ENCODE measurements at regions of chr6 and their contacts with region 1.

Region 1: DNA sequence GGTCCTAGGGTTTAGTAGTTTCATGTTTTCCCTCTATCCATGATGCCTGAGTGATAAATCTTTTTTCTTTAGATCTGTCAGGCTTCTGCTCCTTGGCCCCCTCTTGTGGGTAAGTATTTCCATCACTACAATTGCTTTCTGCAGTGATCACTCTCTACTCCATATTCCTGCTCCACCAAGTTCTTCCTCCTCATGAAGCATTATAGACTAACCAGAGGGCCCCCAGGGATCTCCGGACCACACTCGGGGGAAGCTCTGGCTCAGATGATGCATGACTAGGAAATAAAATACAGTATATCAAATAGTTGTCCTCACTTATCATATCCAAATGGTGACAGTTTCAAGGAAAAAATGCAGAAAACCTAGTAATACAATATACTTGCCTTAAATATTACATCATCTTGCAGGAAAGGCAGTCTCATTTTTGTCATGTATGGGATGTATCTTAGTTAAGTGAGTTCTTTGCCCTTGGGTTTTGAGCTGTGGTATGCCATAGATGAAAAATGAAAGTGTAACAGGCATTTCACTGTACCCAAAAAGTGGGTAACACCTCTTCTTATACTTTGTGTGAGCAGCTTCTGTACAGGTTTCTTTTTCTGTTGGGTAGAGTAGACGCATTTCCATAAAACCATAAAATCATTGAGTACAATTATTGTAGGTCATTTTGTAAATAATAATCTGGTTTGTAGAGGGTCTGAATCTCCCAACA is 200.9 kb upstream of the EYA4 start:
- H3K4me3 ChIP-seq: no peak overlapping the region
- H3K27ac ChIP-seq: no peak overlapping the region
- H3K4me1 ChIP-seq: peaks cover 6% of the 10 kb centered on the region; the same call in 1 of the 2 replicates
- CTCF ChIP-seq: peak; percentile 42; the same call in 1 of the 2 replicates

Region 2: DNA sequence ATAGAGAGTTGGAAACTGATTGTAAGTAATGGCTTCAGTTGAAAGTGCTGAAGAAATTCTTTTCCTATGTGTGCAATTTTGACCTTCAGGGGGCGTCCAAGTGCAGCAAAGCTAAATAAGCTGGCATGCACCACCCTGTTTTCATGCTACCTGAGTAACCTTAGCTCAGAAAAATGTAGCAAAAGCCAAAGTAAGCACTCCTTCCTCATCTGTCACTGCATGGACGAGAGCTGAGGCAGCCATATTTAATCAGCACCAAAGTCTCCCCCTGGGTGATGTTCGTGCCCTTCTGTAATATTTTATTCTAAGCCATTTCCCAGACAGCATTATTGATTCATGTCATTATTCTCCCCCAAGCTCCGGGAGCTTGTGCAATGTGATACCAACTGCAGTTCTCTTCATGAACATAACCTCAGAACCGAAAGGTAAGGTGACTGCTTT is 102.8 kb before region 1 on chr6:
- CTCF ChIA-PET with region 1: interaction called, 12 read pairs
- POLR2A ChIA-PET with region 1: no interaction called
- H3K4me3 ChIP-seq: no peak overlapping the region
- H3K27ac ChIP-seq: no peak overlapping the region
- H3K4me1 ChIP-seq: peaks cover 8% of the 10 kb centered on the region
- CTCF ChIP-seq: peak; percentile 53

Region 3: GRCh38 chr6:132973514-132973993 is 66.7 kb before region 1 on chr6:
- CTCF ChIA-PET with region 1: interaction called, 10 read pairs
- POLR2A ChIA-PET with region 1: no interaction called
- H3K4me3 ChIP-seq: no peak overlapping the region
- H3K27ac ChIP-seq: no peak overlapping the region
- H3K4me1 ChIP-seq: peaks cover 19% of the 10 kb centered on the region
- CTCF ChIP-seq: no peak

Region 4: DNA sequence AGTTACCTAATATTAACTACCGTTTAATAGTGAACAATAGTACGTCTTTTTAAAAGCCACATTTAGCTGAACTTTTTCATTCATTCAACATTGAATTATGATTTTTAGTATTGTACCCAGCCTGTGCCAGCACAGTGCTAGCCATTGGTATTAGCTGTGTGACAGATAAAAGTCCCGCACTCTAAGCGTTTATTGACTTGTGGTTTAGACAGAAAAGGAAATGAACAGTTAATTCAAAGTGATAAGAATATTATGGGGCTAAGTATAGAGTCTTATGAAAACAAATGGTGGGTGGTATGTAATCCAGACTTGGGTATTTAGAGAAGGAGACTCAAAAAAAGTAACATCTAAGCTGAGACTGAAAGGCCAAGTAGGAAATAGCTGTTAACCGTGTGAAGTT is 23.6 kb before region 1 on chr6:
- CTCF ChIA-PET with region 1: interaction called, 12 read pairs
- POLR2A ChIA-PET with region 1: no interaction called
- H3K4me3 ChIP-seq: no peak overlapping the region
- H3K27ac ChIP-seq: no peak overlapping the region
- H3K4me1 ChIP-seq: peaks cover 8% of the 10 kb centered on the region
- CTCF ChIP-seq: no peak

Region 5: GRCh38 chr6:133156689-133157088 is 116.4 kb after region 1 on chr6:
- CTCF ChIA-PET with region 1: no interaction called
- POLR2A ChIA-PET with region 1: no interaction called
- H3K4me3 ChIP-seq: no peak overlapping the region
- H3K27ac ChIP-seq: no peak overlapping the region
- H3K4me1 ChIP-seq: no peaks in the 10 kb centered on the region
- CTCF ChIP-seq: no peak